MCF 10A (cell line): ENCODE measurements at regions of chr1 and their contacts with region 1.

Region 1: DNA sequence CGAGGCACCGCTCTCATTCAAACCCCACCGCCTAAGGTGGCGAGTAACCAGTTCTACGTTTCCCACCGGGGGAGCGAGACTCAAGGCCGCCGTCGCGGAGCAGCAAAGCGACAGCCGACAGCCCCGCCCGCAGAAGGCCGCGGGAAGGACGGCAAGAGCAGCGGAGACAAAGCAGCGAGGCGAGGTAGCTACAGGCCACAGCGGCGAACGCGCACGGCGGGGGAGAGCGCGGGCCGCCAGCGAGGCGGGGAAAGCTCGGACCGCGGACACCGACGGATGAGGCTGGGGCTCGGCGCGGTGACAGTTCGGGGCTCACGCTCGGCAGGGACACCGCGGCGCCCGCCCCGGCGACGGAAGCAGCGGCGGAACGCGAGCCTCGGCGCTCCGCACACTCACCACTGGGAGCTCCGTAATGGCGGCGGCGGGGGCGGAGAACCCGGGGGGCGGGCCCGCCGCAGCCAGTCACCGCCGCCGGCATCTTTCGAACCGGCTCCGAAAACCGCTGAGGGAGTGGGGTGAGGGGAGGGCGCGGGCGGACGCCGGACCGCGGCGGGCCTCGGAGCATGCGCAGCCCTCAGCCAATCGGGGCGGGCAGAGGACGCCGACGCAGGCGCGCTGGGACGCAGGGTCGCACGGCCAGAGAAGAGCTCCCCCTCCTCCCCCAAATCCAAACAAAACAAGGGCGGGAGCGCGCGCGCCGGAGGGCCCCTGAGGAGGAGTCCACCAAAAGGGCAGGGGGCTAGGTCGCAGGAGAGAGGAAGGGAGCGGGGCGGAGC is 666 bp downstream of the HP1BP3 start:
- DNase-seq: peak; percentile 93
- H3K4me3 Mint-ChIP-seq: peak overlapping the region; percentile 95
- H3K27ac Mint-ChIP-seq: peak overlapping the region; percentile 95
- H3K4me1 Mint-ChIP-seq: peaks cover 10% of the 10 kb centered on the region
- H3K27me3 Mint-ChIP-seq: no peaks in the 10 kb centered on the region
- CTCF ChIP-seq: no peak

Region 2: DNA sequence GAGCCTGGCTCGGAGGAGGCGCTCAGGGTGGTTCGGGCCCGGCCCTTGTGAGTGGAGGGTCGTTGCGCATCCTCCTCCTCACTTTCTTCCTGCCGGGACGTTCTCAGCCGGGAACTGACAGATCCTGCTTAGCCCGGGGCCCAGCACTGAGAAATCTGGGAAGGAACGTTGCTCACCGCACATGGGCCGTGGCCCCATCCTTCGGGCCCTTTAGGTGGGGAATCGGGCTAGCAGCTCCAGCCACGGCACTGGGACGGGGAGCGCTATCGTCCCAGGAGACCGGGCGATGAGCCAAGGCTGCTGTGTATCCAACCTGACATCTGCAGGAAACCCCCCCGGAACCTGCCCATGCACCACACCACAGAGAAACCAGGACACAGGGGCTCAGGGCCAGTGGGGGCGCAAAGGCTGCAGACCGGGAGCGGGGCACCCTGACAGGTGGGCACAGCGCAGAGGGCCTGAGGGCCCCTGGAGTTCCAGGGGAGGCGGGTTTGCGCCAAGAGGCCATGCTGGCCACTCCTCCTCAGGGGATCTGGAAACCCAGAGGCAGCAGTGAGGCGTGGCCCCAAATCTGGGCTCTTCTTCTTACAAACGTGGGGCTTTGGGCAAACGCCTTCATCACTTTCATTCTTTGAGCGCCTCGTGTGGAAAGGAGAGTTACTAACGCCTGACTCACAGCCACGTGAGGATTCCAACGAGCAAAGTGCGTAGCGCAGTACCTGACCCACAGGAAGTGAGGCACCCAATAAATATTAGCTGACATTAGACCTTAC is 53.7 kb before region 1 on chr1 and contains the start of gene SH2D5:
- CTCF ChIA-PET with region 1: no interaction called
- POLR2A ChIA-PET with region 1: interaction called, 17 read pairs
- intact Hi-C with region 1: no loop called
- DNase-seq: peak; percentile 97
- H3K4me3 Mint-ChIP-seq: peak within 1 kb of the TSS; percentile 85
- H3K27ac Mint-ChIP-seq: peak within 1 kb of the TSS; percentile 90
- H3K4me1 Mint-ChIP-seq: peaks cover 8% of the 10 kb centered on the region
- H3K27me3 Mint-ChIP-seq: no peaks in the 10 kb centered on the region
- CTCF ChIP-seq: no peak
- total RNA-seq, gene SH2D5: 14.0 and 14.6 TPM in 2 replicates

Region 3: DNA sequence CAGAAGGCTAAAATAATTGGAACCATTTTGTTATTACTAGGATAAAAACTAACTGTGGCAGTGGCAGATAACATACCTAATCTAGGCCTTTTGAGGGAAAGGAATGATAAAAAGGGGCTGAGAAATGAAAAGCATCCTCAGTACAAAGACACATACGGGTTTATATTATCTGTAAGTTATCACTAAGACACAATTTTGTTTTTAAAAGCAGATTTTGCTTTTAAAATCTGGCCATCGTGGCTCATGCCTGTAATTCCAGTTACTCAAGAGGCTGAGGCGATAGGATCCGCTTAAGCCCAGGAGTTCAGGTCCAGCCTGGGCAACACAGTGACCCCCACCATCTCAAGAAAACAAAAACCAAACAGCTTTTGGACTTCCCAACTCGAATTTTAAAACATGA is 25.5 kb after region 1 on chr1:
- CTCF ChIA-PET with region 1: interaction called, 3 read pairs
- POLR2A ChIA-PET with region 1: interaction called, 16 read pairs
- intact Hi-C with region 1: no loop called
- DNase-seq: no peak
- H3K4me3 Mint-ChIP-seq: no peak overlapping the region
- H3K27ac Mint-ChIP-seq: no peak overlapping the region
- H3K4me1 Mint-ChIP-seq: no peaks in the 10 kb centered on the region
- H3K27me3 Mint-ChIP-seq: no peaks in the 10 kb centered on the region
- CTCF ChIP-seq: no peak

Region 4: GRCh38 chr1:21175670-21176581 is 389.5 kb after region 1 on chr1:
- CTCF ChIA-PET with region 1: no interaction called
- POLR2A ChIA-PET with region 1: interaction called, 30 read pairs
- intact Hi-C with region 1: no loop called
- DNase-seq: peak; percentile 25
- H3K4me3 Mint-ChIP-seq: peak overlapping the region; percentile 84
- H3K27ac Mint-ChIP-seq: peak overlapping the region; percentile 90
- H3K4me1 Mint-ChIP-seq: peaks cover 26% of the 10 kb centered on the region
- H3K27me3 Mint-ChIP-seq: no peaks in the 10 kb centered on the region
- CTCF ChIP-seq: no peak